ENCODE measurements at regions of chr9 and their contacts with region 1.

Region 1: DNA sequence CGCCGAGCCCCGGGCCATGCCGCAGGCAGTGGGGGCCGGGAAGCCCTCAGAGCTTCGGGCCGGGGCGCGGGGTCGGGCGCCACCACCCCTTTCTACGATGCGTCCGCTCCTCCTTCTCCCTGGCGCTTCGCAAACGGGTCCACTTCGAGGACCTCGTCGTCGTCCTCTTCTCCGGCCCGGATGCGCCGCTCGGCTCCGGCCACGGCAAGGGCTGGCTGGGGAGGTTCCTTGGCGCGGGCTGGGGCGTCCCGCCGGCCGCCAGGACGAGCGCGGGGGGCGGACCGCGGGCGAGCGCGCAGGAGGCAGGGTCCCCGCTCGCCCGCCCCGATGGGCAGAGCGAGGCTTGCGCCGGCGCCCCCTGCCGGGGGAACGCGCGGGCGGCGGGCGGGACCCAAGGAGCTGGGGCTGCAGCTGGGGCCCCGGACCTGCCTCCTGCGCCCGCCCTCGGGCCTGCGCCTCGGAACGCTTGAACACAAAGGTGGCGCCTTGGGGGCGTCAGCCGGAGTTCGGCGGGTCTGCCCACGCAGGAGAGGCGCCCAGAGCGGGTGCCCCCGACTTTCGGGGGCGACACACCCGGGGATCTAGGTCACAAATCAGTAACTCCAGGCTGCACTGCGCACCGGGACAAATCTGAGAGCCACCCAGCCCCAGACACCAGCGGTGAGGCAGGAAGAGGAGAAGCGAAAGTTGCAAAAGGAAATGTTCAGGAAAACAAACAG is at the start of gene ROR2:
- DNase-seq: peak; percentile 76
- H3K4me3 ChIP-seq: peak within 1 kb of the TSS; percentile 62 to 65
- H3K27ac ChIP-seq: peak within 1 kb of the TSS; percentile 63 to 76
- H3K4me1 ChIP-seq: peaks cover 3% of the 10 kb centered on the region
- H3K27me3 ChIP-seq: no peaks in the 10 kb centered on the region
- CTCF ChIP-seq: peak; percentile 62 to 83 (median 67)
- POLR2A ChIP-seq: no peak
- total RNA-seq, gene ROR2: 12.3 to 16.5 TPM

Region 2: GRCh38 chr9:91285729-91286353 is 664.3 kb before region 1 on chr9:
- intact Hi-C with region 1: no loop called
- DNase-seq: no peak
- H3K4me3 ChIP-seq: no peak overlapping the region
- H3K27ac ChIP-seq: no peak overlapping the region
- H3K4me1 ChIP-seq: no peaks in the 10 kb centered on the region
- H3K27me3 ChIP-seq: no peaks in the 10 kb centered on the region
- CTCF ChIP-seq: no peak
- POLR2A ChIP-seq: no peak

Region 3: GRCh38 chr9:91771027-91771426 is 179.1 kb before region 1 on chr9:
- intact Hi-C with region 1: loop called (anchors 2 kb)
- DNase-seq: peak; percentile 38
- H3K4me3 ChIP-seq: no peak overlapping the region
- H3K27ac ChIP-seq: no peak overlapping the region
- H3K4me1 ChIP-seq: no peaks in the 10 kb centered on the region
- H3K27me3 ChIP-seq: no peaks in the 10 kb centered on the region
- CTCF ChIP-seq: no peak
- POLR2A ChIP-seq: no peak

Measured in testis (tissue), 5 donors.